Endothelial cell of umbilical vein (primary cell): ENCODE measurements at regions of chr20 and their contacts with region 1.

Region 1: DNA sequence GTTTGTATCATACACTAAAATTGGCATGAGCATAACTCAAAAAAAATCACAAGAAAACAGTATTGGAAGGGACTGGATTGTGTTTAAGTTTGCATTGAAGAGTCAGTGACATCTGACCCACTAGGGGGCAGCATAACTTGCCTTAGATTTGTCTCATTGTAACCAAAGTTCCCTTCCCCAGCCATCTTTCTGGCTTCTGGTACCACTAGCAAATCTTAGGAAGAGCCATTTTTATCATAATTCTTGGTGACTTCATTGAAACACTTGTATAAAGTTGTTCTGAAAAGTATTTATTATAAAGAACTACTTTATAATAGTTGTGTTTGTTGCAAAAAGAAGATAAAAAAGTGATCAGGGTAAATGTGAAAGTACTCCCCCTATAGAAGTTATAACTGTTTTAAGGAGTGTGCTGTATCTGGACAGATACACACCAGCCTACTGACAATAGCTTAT is 7.7 kb downstream of the CSTF1 start:
- DNase-seq: peak; percentile 74
- H3K4me3 ChIP-seq: no peak overlapping the region
- H3K27ac ChIP-seq: no peak overlapping the region
- H3K4me1 ChIP-seq: no peaks in the 10 kb centered on the region
- H3K27me3 ChIP-seq: no peaks in the 10 kb centered on the region
- CTCF ChIP-seq: peak; percentile 66 to 69
- POLR2A ChIP-seq: no peak

Region 2: GRCh38 chr20:56468316-56469082 is 68.4 kb after region 1 on chr20 and contains the start of gene RTF2:
- CTCF ChIA-PET with region 1: interaction called, 6 read pairs
- POLR2A ChIA-PET with region 1: no interaction called
- dilution Hi-C with region 1: no loop called
- intact Hi-C with region 1: loop called (anchors 1 kb)
- DNase-seq: peak; percentile 95
- H3K4me3 ChIP-seq: peak within 1 kb of the TSS; percentile 83 to 95 (median 92)
- H3K27ac ChIP-seq: peak within 1 kb of the TSS; percentile 87
- H3K4me1 ChIP-seq: peaks cover 7% of the 10 kb centered on the region
- H3K27me3 ChIP-seq: peaks cover 0 to 3% of the 10 kb centered on the region in 2 experiments
- CTCF ChIP-seq: no peak
- POLR2A ChIP-seq: peak; percentile 78
- total RNA-seq, gene RTF2: 82.2 and 84.7 TPM in 2 replicates

Region 3: DNA sequence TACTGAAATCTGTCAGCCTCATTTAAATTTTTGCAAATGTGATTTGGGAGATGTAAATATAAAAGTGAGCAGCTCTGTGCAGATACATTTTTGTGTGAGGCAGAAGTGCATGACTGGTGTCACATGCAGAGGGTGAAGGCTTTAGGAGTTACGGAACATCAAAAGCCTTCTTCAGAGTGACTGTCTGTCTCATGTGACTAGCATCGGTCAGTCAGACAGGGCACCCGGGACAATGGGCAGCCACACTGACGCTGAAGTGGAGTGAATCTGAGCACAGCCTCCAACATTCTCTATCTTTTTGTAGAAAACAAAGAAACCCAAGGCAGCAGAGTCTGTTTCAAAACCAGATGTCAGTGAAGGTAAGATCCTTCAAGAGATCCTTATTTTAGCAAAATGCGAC is 116.5 kb after region 1 on chr20:
- CTCF ChIA-PET with region 1: no interaction called
- POLR2A ChIA-PET with region 1: no interaction called
- dilution Hi-C with region 1: no loop called
- intact Hi-C with region 1: loop called (anchors 1 kb)
- DNase-seq: no peak
- H3K4me3 ChIP-seq: no peak overlapping the region
- H3K27ac ChIP-seq: no peak overlapping the region
- H3K4me1 ChIP-seq: no peaks in the 10 kb centered on the region
- H3K27me3 ChIP-seq: no peaks in the 10 kb centered on the region
- CTCF ChIP-seq: no peak
- POLR2A ChIP-seq: no peak

Region 4: DNA sequence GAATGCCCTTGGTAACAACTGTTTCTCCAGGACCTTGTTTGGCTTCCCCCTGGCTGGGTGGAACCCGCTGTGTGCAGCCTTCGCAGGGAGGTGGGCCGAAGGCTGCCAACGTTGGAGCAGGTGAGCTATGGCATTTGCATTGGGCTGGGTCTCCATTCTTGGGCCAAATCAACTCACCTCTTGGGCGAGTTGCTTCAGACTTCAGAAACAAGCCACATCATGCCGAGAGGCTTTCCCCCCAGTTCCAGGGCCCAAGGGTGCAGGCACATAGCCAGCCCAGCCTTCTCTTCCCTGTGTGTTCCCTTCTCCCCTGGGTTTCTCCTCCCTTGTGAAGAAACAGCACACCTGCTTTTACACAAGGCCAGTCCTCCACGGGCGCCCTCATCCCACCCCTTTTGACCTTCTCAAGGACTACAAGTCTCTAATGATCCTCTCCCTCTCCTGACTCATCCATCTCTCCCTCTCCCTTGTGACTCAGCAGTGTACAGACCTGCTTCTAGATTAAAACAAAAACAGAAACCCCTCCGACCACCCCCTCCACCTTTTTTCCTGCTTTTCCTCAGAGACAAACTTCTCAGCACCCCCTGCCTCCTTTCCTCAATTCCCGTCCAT is 174.5 kb after region 1 on chr20:
- CTCF ChIA-PET with region 1: no interaction called
- POLR2A ChIA-PET with region 1: no interaction called
- dilution Hi-C with region 1: no loop called
- intact Hi-C with region 1: loop called (anchors 1 kb)
- DNase-seq: no peak
- H3K4me3 ChIP-seq: no peak overlapping the region
- H3K27ac ChIP-seq: no peak overlapping the region
- H3K4me1 ChIP-seq: no peaks in the 10 kb centered on the region
- H3K27me3 ChIP-seq: no peaks in the 10 kb centered on the region
- CTCF ChIP-seq: no peak
- POLR2A ChIP-seq: no peak